T-cell (primary cell): ENCODE measurements at regions of chr15 and their contacts with region 1.

Region 1: GRCh38 chr15:38440353-38441129 is 13.4 kb upstream of the FAM98B start:
- DNase-seq: peak in 34 of 35 experiments; percentile 12 to 88 (median 33)
- ATAC-seq: peak; percentile 82 to 91 (median 88)
- H3K4me3 ChIP-seq: no peak overlapping the region
- H3K4me3 Mint-ChIP-seq: no peak overlapping the region
- H3K27ac ChIP-seq: no peak overlapping the region
- H3K27ac Mint-ChIP-seq: no peak overlapping the region
- H3K4me1 ChIP-seq: peaks cover 0 to 5% of the 10 kb centered on the region in 2 experiments
- H3K4me1 Mint-ChIP-seq: peaks cover 5 to 9% (median 8%) of the 10 kb centered on the region in 3 donors
- H3K27me3 ChIP-seq: peaks cover 0 to 2% of the 10 kb centered on the region in 2 experiments
- H3K27me3 Mint-ChIP-seq: peaks cover 21 to 25% of the 10 kb centered on the region in 2 donors

Region 2: GRCh38 chr15:38453971-38454695 is 13.6 kb after region 1 on chr15 and contains the start of gene FAM98B:
- CTCF ChIA-PET with region 1: interaction called, 3 to 23 read pairs
- POLR2A ChIA-PET with region 1: interaction called in 1 of 2 experiments, 4 read pairs
- DNase-seq: peak; percentile 69 to 92 (median 79)
- ATAC-seq: peak; percentile 85 to 91 (median 88)
- H3K4me3 ChIP-seq: peak within 1 kb of the TSS; percentile 88 to 93
- H3K4me3 Mint-ChIP-seq: peak within 1 kb of the TSS; percentile 95 to 98 (median 96)
- H3K27ac ChIP-seq: peak within 1 kb of the TSS; percentile 88
- H3K27ac Mint-ChIP-seq: peak within 1 kb of the TSS; percentile 93 to 94
- H3K4me1 ChIP-seq: peaks cover 5 to 8% of the 10 kb centered on the region in 2 experiments
- H3K4me1 Mint-ChIP-seq: peaks cover 39 to 44% (median 42%) of the 10 kb centered on the region in 3 donors
- H3K27me3 ChIP-seq: no peaks in the 10 kb centered on the region
- H3K27me3 Mint-ChIP-seq: no peaks in the 10 kb centered on the region
- total RNA-seq, gene FAM98B: 15.1 to 24.4 (median 20.6) TPM

Region 3: GRCh38 chr15:38733331-38733730 is 292.8 kb after region 1 on chr15:
- CTCF ChIA-PET with region 1: no interaction called
- POLR2A ChIA-PET with region 1: interaction called in 1 of 2 experiments, 12 read pairs
- DNase-seq: no peak
- ATAC-seq: no peak
- H3K4me3 ChIP-seq: no peak overlapping the region
- H3K4me3 Mint-ChIP-seq: no peak overlapping the region
- H3K27ac ChIP-seq: no peak overlapping the region
- H3K27ac Mint-ChIP-seq: no peak overlapping the region
- H3K4me1 ChIP-seq: no peaks in the 10 kb centered on the region
- H3K4me1 Mint-ChIP-seq: no peaks in the 10 kb centered on the region
- H3K27me3 ChIP-seq: peaks cover 0 to 2% of the 10 kb centered on the region in 2 experiments
- H3K27me3 Mint-ChIP-seq: peaks cover 7 to 10% of the 10 kb centered on the region in 2 donors